GM13976 (cell line): ENCODE measurements at regions of chr10 and their contacts with region 1.

Region 1: GRCh38 chr10:94630017-94630688 is 53.4 kb upstream of the CYP2C18 start:
- DNase-seq: peak; percentile 40
- CTCF ChIP-seq: peak; percentile 27

Region 2: GRCh38 chr10:94521276-94522250 is 108.6 kb before region 1 on chr10:
- in situ Hi-C with region 1: no loop called
- DNase-seq: no peak
- CTCF ChIP-seq: no peak

Region 3: DNA sequence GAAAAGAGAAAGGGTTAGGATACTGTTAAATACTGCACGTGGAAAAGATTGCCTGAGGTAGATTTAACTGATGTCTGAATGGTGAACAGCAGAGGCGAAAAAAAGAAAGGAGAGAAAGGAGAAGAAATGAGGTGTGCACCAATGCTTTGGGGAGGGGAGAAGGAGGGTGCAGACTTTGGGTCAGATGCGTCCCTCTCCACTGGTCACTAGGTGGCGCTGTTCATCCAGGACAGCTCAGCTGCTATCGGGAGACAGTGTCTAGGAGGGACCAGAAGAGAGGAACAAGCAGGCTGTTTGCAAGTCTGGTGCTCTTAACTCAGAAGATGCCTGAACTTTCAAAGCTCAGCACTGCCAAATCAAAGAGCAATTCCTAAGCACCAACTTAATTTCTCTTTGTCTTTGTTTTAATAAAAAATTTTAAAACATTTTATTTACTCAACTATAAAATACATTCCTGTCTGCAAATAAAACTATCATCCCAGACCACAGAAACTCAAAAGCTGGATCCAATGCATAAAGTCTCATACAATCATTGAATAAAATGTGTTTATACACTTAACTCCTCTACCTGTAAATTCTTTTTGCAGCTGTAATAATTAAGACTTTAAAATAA is 744.5 kb after region 1 on chr10:
- in situ Hi-C with region 1: loop called (anchors 25 kb)
- DNase-seq: peak; percentile 73
- CTCF ChIP-seq: peak; percentile 90